Posterior vena cava (tissue), 2 donors: ENCODE measurements at regions of chr10 and their contacts with region 1.

Region 1: GRCh38 chr10:49277973-49278372 is 21.0 kb upstream of the C10orf71 start:
- DNase-seq: no peak

Region 2: GRCh38 chr10:49242604-49243003 is 35.4 kb before region 1 on chr10:
- intact Hi-C with region 1: loop called in 1 of 2 experiments (anchors 1 kb)
- DNase-seq: peak; percentile 72

Region 3: GRCh38 chr10:49254556-49255318 is 23.2 kb before region 1 on chr10:
- intact Hi-C with region 1: no loop called
- DNase-seq: no peak

Region 4: DNA sequence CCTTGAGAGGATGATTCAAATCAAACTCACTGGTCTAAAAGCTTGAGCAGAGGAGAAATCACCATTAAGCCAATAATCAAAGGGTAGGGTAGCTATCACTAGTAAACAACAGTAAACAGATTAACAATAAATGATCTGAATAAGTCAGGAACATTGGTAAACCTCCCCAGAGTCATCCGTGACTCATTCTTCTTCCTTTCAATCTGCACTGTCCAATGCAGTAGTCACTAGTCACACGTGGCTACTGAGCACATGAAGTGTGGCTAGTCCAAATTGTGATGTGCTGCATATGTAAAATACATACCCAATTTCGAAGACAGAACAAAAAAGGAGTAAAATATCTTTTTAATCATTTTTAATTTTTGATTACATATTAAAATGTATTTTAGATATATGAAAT is 196.9 kb after region 1 on chr10:
- intact Hi-C with region 1: no loop called
- DNase-seq: no peak